ENCODE measurements at regions of chr11 and their contacts with region 1.

Region 1: GRCh38 chr11:447923-448731 is 2.0 kb upstream of the PTDSS2 start:
- DNase-seq: peak; percentile 98
- ATAC-seq: peak; percentile 89
- H3K4me3 Mint-ChIP-seq: peak overlapping the region; percentile 86
- H3K27ac Mint-ChIP-seq: peak overlapping the region; percentile 94
- H3K4me1 Mint-ChIP-seq: peaks cover 20% of the 10 kb centered on the region
- H3K27me3 Mint-ChIP-seq: no peaks in the 10 kb centered on the region
- CTCF ChIP-seq: peak; percentile 79

Region 2: DNA sequence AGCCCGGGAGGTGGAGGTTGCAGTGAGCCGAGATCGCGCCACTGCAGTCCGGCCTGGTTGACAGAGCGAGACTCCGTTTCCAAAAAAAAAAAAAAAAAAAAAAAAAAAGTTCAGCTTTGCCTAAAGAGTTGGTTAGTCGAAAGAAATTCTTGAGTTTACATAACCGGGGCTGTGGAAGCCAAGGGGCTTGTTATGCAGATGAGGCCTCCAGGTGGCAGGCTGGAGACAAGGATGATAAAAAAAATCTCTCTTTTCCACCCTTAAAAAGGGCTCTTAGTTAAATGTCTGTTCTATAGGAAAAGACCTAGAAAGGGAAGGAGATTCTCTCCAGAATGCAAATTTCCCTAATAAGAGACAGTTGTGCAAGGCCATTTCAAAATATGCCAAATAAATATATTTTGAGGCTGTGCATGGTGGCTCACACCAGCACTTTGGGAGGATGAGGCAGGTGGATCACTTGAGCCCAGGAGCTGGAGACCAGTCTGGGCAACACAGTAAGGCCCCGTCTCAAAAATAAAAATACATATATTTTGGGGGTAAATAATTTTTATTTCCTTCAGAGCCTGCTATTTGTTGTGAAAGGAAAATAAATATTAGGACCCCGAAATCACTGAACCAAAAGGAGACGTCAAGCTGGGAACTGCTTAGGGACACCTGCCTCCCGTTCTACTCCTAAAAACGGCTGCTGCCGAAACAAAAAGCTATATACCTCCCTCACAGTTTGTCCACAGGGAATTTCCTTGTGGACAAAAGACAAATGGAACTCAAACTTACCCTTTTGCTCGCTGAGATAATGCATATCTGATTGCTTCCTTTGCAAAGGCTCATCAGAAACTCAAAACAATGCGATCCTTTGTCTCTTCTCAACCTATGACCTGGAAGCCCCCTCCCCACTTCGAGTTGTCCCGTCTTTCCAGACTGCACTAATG is 142.9 kb before region 1 on chr11:
- CTCF ChIA-PET with region 1: interaction called, 22 read pairs
- POLR2A ChIA-PET with region 1: no interaction called
- intact Hi-C with region 1: no loop called
- DNase-seq: peak; percentile 85
- ATAC-seq: peak; percentile 25
- H3K4me3 Mint-ChIP-seq: no peak overlapping the region
- H3K27ac Mint-ChIP-seq: no peak overlapping the region
- H3K4me1 Mint-ChIP-seq: peaks cover 49% of the 10 kb centered on the region
- H3K27me3 Mint-ChIP-seq: peaks cover 5% of the 10 kb centered on the region
- CTCF ChIP-seq: peak; percentile 86

Region 3: GRCh38 chr11:406978-407739 is 41.0 kb before region 1 on chr11:
- CTCF ChIA-PET with region 1: interaction called, 26 read pairs
- POLR2A ChIA-PET with region 1: interaction called, 6 read pairs
- intact Hi-C with region 1: no loop called
- DNase-seq: peak; percentile 96
- ATAC-seq: peak; percentile 91
- H3K4me3 Mint-ChIP-seq: peak overlapping the region; percentile 27
- H3K27ac Mint-ChIP-seq: no peak overlapping the region
- H3K4me1 Mint-ChIP-seq: peaks cover 5% of the 10 kb centered on the region
- H3K27me3 Mint-ChIP-seq: no peaks in the 10 kb centered on the region
- CTCF ChIP-seq: no peak

Region 4: DNA sequence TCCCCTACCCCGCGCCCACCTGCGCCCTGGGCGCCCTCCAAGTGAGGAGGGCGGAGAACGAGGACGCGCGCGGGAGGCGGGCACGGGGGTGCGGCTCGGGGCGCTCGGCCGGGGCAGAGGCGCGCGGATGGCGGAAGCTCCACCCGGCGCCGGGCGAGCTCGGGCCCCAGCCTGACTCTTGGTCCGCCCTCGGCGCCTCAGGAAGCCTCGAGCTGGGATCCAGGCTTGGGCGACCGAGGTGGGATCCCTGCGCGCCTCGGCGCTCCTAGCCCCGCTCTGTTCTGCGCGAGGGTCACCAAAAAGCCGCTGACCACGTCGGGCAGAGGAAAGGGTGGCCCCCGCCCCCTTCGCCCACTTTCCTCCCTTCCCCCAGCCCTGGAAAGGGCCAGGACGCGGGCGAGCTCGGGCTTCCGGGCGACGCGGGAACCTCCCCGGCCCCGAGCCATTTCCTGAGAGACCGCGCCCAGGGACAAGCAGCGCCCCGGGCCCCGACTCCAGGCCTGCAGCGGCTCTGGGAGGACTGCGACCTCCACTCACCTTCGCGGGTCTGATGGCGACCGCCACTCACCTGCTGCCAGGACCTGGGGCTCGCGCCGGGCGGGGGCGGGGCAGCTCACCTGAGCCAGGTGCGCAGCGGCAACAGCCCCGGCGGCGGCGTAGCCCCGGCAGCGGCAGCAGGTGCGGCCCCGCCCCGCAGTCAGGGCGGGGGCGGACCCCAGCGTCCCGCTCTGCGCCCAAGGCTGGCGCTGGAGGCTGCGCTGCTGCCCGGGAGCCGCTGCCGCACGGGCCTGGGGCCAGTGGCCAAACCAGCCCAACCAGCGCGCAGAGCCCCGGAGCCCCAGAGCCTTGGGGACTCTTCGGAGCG is 31.1 kb before region 1 on chr11:
- CTCF ChIA-PET with region 1: interaction called, 24 read pairs
- POLR2A ChIA-PET with region 1: interaction called, 4 read pairs
- intact Hi-C with region 1: no loop called
- DNase-seq: peak; percentile 56
- ATAC-seq: peak; percentile 31
- H3K4me3 Mint-ChIP-seq: peak overlapping the region; percentile 77
- H3K27ac Mint-ChIP-seq: no peak overlapping the region
- H3K4me1 Mint-ChIP-seq: peaks cover 24% of the 10 kb centered on the region
- H3K27me3 Mint-ChIP-seq: no peaks in the 10 kb centered on the region
- CTCF ChIP-seq: no peak

Region 5: DNA sequence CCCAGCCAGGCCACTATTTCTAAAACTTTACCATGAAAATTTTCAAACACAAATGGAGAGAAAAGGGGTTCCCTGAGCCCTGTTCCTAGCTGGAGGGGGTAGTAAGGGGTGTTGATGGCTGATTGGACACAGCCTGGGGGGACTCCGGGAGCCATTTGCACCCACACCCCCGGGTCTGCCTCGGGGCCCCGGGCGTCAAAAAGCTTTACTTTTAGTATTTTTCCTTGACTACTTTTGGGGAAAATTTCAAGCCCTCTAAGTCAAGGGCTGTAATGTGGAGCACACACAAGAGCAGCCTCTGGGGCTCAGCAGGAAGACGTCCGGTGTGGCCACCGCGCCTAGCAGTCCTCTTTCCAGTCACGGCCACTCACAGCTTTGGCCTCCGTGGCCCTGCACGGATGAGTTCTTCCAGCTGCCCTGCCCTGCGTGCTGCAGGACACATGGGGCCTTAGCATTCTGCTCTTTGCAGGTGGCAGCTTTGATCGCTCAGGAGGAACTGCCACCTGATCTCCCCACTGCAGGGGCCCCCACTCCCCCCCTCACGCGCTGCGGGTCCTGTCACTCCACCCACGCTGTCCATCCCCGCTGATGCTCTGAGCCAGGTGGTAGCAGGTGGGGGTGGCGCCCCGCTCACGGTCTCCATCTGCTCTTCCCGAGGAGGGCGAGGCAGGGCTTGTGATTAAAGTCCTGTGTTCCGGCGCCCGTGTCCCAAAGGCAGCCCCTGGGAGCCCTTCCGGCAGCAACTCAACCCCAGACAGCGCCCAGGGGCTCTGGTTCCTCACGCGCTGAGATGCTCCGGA is 44.5 kb after region 1 on chr11:
- CTCF ChIA-PET with region 1: no interaction called
- POLR2A ChIA-PET with region 1: no interaction called
- intact Hi-C with region 1: no loop called
- DNase-seq: no peak
- ATAC-seq: no peak
- H3K4me3 Mint-ChIP-seq: no peak overlapping the region
- H3K27ac Mint-ChIP-seq: no peak overlapping the region
- H3K4me1 Mint-ChIP-seq: peaks cover 11% of the 10 kb centered on the region
- H3K27me3 Mint-ChIP-seq: no peaks in the 10 kb centered on the region
- CTCF ChIP-seq: no peak

Region 6: DNA sequence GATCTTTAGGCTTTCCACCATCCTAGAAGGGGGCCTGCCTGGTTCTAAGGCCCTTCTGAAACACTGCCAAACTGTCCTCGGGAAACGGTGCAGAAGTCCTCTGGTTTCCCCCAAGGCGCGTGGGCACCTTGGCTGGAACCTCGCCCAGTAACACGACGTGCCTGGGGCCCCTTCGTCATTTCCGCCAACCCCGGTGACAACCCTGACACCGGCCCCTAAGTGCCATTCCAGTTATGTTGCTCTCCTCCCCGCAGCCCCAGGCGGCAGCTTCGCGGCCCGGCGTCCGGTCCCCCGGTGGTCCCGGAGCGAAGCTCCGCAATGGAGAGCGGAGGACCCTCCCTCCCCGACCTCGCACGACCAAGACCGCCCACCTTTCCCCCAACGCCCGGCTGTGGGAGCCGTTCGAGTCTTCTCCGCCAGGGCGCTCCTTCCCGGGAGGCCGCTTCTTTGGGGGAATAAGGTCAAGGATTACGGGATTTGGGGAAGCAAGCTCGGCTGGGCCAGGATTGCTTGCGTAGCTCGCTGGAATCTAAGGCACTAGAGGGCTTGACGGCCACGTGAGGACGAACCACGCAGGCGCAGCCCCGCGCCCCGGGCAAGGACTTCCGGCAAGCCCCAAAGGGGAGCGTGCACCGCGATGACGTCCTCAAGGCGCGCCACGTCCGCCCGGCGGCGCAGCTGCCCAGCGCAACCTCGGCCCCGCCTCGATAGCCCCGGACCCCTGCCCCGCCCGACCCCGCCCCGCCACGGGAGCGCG is 58.3 kb after region 1 on chr11:
- CTCF ChIA-PET with region 1: interaction called, 5 read pairs
- POLR2A ChIA-PET with region 1: interaction called, 22 read pairs
- intact Hi-C with region 1: no loop called
- DNase-seq: peak; percentile 97
- ATAC-seq: peak; percentile 80
- H3K4me3 Mint-ChIP-seq: peak overlapping the region; percentile 94
- H3K27ac Mint-ChIP-seq: peak overlapping the region; percentile 99
- H3K4me1 Mint-ChIP-seq: peaks cover 24% of the 10 kb centered on the region
- H3K27me3 Mint-ChIP-seq: no peaks in the 10 kb centered on the region
- CTCF ChIP-seq: no peak

Region 7: GRCh38 chr11:518463-519250 is 70.5 kb after region 1 on chr11:
- CTCF ChIA-PET with region 1: interaction called, 11 read pairs
- POLR2A ChIA-PET with region 1: no interaction called
- intact Hi-C with region 1: no loop called
- DNase-seq: peak; percentile 86
- ATAC-seq: peak; percentile 97
- H3K4me3 Mint-ChIP-seq: peak overlapping the region; percentile 74
- H3K27ac Mint-ChIP-seq: peak overlapping the region; percentile 68
- H3K4me1 Mint-ChIP-seq: peaks cover 3% of the 10 kb centered on the region
- H3K27me3 Mint-ChIP-seq: no peaks in the 10 kb centered on the region
- CTCF ChIP-seq: peak; percentile 100